Psoas muscle (tissue), 8 donors: ENCODE measurements at regions of chr11 and their contacts with region 1.

Region 1: DNA sequence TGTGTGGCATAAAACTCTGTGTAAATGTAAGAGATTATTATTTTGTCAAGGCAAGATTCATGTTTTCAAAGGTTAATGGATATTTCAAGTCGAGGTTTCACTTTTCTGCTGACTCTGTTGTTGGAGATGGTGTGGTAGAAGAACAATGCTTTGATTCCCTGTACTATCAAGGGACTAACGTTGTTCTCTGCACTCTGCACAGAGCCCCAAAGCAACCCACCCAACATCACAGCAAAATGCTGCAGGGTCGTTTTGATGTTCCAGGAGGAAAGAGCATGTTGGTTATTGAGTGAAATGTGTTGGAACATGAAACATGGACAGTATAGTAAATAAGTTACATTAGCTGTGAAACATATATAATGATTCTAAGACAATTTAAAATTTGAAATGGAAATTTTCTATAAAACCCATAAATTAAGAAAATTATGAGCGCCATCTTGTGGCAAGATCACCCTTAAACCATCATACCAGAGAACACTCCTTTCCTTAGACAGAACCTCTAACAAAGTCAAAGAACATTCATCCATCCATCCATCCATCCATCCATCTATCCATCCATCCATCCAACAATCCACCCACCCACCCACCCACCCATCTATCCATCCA is 164.4 kb upstream of the ZBED5 start:
- DNase-seq: no peak
- ATAC-seq: peak in 1 of 4 donors; percentile 66
- H3K4me3 ChIP-seq: no peak overlapping the region
- H3K27ac ChIP-seq: no peak overlapping the region
- H3K4me1 ChIP-seq: no peaks in the 10 kb centered on the region
- H3K27me3 ChIP-seq: no peaks in the 10 kb centered on the region
- CTCF ChIP-seq: peak; percentile 60

Region 2: GRCh38 chr11:10792398-10792975 is 229.7 kb before region 1 on chr11:
- intact Hi-C with region 1: loop called (anchors 1 to 5 kb)
- DNase-seq: peak; percentile 91 to 95
- ATAC-seq: peak; percentile 90 to 94 (median 94)
- H3K4me3 ChIP-seq: peak overlapping the region; percentile 44
- H3K27ac ChIP-seq: no peak overlapping the region
- H3K4me1 ChIP-seq: peaks cover 5% of the 10 kb centered on the region
- H3K27me3 ChIP-seq: no peaks in the 10 kb centered on the region
- CTCF ChIP-seq: peak; percentile 86

Region 3: GRCh38 chr11:10933455-10934292 is 88.6 kb before region 1 on chr11:
- intact Hi-C with region 1: loop called (anchors 1 to 2 kb)
- DNase-seq: peak; percentile 89 to 94
- ATAC-seq: peak; percentile 87 to 91 (median 90)
- H3K4me3 ChIP-seq: peak overlapping the region; percentile 63
- H3K27ac ChIP-seq: peak overlapping the region; percentile 65
- H3K4me1 ChIP-seq: no peaks in the 10 kb centered on the region
- H3K27me3 ChIP-seq: no peaks in the 10 kb centered on the region
- CTCF ChIP-seq: peak; percentile 99

Region 4: DNA sequence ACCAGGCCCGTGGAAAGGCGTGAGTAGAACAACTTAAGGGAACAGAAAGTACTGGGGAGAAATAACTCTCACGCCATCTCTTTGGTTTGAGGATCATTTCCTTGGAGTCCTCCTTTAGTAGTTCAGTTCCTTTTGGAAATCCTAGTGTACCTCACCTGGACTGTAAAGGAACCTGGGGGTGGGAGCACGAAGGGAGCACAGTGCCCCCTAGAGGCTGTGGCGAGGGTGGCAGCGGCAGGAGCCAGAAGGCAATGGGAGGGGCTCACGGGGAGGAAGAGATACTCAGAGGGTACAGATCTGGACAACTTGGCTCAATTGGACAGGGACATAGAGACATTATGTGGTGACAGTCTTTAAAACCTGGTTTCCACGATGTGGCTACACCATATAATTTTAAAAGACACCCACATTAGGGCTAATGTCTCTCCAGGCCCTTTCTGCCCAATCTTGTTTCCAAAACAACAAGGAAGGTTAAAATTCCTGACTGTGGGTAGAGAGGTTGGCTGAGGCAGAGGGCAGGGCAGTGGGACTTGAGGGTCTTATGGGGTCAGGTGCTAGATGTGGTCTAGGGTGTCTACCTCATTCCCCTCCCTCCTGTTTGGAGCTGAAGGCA is 243.9 kb after region 1 on chr11:
- intact Hi-C with region 1: loop called in 1 of 2 experiments (anchors 5 kb)
- DNase-seq: peak; percentile 40 to 76
- ATAC-seq: peak; percentile 69 to 92 (median 84)
- H3K4me3 ChIP-seq: no peak overlapping the region
- H3K27ac ChIP-seq: no peak overlapping the region
- H3K4me1 ChIP-seq: no peaks in the 10 kb centered on the region
- H3K27me3 ChIP-seq: no peaks in the 10 kb centered on the region
- CTCF ChIP-seq: peak; percentile 82